A673 (cell line): ENCODE measurements at regions of chr3 and their contacts with region 1.

Region 1: DNA sequence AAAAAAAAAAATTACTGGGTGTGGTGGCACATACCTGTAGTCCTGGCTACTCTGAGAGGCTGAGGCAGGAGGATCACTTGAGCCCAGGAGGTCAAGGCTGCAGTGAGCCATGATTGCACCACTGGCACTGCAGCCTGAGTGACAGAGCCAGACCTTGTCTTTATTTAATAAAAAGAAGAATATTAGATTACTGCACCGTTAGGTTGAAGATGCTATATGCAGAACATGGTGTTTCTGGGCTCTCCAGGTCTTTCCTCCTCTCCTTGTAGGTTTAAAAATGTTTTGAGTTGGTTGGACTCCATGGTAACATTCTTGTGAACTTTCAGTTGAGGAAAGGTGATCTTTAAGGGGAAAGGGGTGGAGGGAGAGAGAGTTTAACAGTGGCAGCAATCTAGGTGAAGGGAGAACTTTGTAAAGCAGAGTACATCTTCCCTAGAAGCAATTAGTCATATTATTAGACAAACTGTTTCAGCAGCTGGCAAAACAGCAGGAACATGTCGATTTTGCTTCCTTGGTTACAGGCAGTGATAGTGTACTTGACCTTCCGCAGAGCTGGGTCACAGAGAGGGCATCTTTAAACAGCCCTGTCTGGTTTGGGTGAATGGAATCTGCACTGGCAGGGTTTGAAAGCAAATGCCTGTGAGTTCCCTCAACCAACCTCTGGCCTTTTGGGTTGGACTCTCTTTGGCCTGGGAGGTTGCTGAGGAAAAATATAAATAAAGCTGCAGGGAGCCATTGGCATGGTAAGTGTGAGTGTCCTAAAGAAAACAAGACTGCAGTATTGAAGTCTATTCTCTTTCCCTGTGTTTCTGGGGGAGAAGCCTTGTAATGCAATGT is 42.8 kb downstream of the NR2C2 start:
- DNase-seq: no peak
- H3K4me3 ChIP-seq: no peak overlapping the region
- H3K27ac ChIP-seq: no peak overlapping the region
- H3K4me1 ChIP-seq: peaks cover 14% of the 10 kb centered on the region
- H3K27me3 ChIP-seq: no peaks in the 10 kb centered on the region
- CTCF ChIP-seq: no peak

Region 2: DNA sequence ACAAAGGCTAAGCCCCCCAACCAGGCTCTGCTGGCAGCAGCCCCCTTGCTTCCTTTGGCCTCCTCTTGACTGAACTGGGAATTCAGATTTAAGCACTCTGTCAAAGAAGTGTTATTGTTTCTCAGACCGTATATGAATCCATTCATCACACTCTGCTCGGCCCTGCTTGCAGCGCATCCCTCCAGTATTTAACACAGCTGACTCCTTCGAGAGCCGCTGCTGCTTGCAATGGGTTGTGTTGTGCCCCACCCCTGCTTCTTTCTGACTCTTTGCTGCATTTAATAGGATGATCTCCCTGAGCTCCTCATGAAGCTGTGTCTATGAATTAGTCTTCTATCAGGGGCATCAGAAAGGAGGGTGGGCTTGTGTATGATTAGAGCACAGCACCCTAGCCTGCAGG is 284.1 kb before region 1 on chr3:
- CTCF ChIA-PET with region 1: no interaction called
- POLR2A ChIA-PET with region 1: no interaction called
- intact Hi-C with region 1: no loop called
- DNase-seq: no peak
- H3K4me3 ChIP-seq: no peak overlapping the region
- H3K27ac ChIP-seq: no peak overlapping the region
- H3K4me1 ChIP-seq: no peaks in the 10 kb centered on the region
- H3K27me3 ChIP-seq: no peaks in the 10 kb centered on the region
- CTCF ChIP-seq: no peak

Region 3: GRCh38 chr3:15051531-15051930 is 61.4 kb after region 1 on chr3:
- CTCF ChIA-PET with region 1: no interaction called
- POLR2A ChIA-PET with region 1: interaction called, 14 read pairs
- intact Hi-C with region 1: no loop called
- DNase-seq: peak; percentile 67
- H3K4me3 ChIP-seq: no peak overlapping the region
- H3K27ac ChIP-seq: no peak overlapping the region
- H3K4me1 ChIP-seq: no peaks in the 10 kb centered on the region
- H3K27me3 ChIP-seq: no peaks in the 10 kb centered on the region
- CTCF ChIP-seq: peak; percentile 78

Region 4: DNA sequence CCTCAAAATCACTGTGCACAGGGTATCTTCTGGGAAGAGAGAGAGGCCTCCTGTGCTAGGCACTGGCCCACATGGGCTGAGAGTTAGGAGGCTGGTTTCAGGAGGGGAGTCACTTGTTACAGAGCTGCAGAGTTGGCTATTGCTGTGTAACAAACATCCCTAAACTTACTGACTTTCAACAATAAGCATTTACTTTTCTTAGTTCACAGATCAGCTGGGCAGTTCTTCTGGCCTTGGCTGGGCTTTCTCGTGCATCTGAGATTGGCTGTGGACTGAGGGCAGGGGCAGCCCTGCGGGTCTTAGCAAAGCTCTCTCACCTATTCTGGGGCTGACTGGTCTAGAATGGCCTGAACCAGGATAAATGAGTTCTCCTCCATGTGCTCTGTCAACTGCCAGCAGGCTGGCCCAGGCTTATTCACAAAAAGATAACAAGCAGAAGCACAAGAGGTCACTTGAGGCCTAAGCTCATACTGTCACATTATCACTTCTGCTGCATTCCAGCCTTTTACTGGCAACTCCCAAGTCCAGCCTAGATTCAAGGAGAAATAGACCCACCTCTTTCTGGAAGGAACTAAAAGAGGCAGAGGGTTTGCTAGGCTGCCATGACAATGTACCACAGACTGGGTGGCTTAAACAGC is 126.0 kb after region 1 on chr3:
- CTCF ChIA-PET with region 1: interaction called, 4 read pairs
- POLR2A ChIA-PET with region 1: interaction called, 13 read pairs
- intact Hi-C with region 1: no loop called
- DNase-seq: no peak
- H3K4me3 ChIP-seq: no peak overlapping the region
- H3K27ac ChIP-seq: no peak overlapping the region
- H3K4me1 ChIP-seq: no peaks in the 10 kb centered on the region
- H3K27me3 ChIP-seq: no peaks in the 10 kb centered on the region
- CTCF ChIP-seq: no peak

Region 5: DNA sequence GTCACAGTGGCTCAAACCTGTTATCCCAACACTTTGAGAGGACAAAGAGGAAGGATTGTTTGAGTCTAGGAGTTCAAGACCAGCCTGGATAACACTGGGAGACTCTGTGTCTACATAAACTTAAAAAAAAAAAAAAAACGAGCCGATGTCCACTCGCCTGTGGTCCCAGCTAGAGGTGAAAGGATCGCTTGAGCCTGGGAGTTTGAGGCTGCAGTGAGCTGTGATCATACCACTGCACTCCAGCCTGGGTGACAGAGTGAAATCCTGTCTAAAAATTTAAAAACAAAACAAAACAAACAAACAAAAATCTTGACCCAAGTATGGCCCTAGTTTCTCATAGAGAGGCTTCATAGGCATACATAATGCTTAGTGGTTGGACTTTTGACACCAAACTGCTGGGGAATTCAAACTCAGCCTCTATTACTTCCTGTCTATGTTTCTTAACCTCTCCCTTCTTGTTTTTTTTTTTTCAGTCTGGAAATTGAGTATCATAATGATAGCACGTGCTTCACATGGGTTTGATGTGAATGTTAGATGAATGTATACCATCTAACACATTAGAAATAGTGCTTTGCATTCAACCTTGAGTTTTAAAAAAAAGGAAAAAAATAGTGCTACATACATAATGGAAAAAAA is 169.5 kb after region 1 on chr3:
- CTCF ChIA-PET with region 1: no interaction called
- POLR2A ChIA-PET with region 1: no interaction called
- intact Hi-C with region 1: no loop called
- DNase-seq: no peak
- H3K4me3 ChIP-seq: no peak overlapping the region
- H3K27ac ChIP-seq: no peak overlapping the region
- H3K4me1 ChIP-seq: no peaks in the 10 kb centered on the region
- H3K27me3 ChIP-seq: peaks cover 45% of the 10 kb centered on the region
- CTCF ChIP-seq: no peak